ENCODE measurements at regions of chr10 and their contacts with region 1.

Region 1: DNA sequence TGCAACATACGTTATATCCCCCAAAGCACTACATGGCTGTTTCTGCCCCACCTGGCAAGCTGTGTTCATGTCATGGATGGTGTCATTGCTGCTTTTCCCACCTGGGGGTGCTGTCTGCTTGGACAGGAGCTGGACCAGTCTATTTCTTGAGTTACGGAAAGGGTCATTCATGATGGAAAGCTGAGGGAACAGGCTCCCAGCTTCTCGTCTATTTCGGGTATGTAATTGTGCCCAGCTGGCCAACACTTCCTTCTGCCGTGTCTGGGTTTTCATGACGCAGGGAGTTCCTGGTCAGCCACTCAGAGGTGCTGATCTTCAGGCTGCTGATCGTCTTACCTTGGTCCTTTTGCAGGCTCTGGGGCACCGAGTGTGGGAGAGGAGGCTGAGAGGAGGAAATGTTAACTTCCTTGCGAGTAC is 8.6 kb downstream of the BTBD16 start:
- DNase-seq: no peak
- ATAC-seq: peak; percentile 80
- H3K4me3 ChIP-seq: no peak overlapping the region
- H3K27ac ChIP-seq: no peak overlapping the region
- H3K4me1 ChIP-seq: peaks cover 8% of the 10 kb centered on the region
- H3K27me3 ChIP-seq: no peaks in the 10 kb centered on the region
- CTCF ChIP-seq: peak; percentile 90

Region 2: DNA sequence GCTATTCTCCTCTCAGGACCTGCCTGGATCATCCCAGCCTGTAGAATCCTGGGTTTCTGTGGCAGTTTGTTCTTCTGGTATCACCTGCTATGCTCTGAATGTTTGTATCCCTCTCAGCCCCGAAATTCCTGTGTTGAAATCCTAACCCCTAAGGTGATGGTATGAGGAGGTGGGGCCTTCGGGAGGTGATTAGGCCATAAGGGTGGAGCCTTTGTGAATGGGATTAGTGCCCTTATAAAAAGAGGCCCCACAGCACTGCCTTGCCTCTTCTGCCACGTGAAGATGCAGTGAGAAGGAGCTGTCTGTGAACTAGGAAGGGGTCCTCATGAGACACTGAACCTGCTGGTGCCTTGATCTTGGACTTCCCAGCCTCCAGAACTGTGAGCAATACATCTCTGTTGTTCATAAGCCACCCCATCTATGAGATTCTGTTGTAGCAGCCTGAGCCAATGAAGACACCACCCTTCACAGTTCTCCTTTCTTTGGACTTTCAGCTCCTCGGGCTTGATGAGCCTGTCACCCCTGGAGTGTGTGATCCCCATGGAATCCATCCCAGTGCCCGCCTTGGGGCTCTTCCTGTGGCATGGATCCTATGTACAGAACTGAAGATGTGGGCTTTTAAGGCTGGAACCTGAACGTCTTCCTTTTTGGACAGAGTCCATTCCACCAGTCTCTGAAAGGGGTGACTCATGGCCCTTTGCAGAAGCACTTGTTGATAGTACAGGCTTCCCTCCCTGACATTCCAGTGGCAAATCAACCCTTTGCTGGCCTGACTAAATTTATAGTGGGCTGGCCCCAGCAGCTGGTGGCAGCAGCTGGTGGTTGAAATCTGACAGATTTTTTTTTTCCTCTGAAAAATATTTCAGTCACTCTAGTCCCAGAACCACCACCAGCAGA is 152.7 kb before region 1 on chr10:
- CTCF ChIA-PET with region 1: no interaction called
- POLR2A ChIA-PET with region 1: interaction called, 16 read pairs
- in situ Hi-C with region 1: no loop called
- intact Hi-C with region 1: no loop called
- DNase-seq: no peak
- ATAC-seq: peak; percentile 83
- H3K4me3 ChIP-seq: peak overlapping the region in 1 of 2 experiments; percentile 41; a peak in 2 of 4 replicates
- H3K27ac ChIP-seq: peak overlapping the region; percentile 82
- H3K4me1 ChIP-seq: peaks cover 69% of the 10 kb centered on the region
- H3K27me3 ChIP-seq: no peaks in the 10 kb centered on the region
- CTCF ChIP-seq: no peak

Region 3: DNA sequence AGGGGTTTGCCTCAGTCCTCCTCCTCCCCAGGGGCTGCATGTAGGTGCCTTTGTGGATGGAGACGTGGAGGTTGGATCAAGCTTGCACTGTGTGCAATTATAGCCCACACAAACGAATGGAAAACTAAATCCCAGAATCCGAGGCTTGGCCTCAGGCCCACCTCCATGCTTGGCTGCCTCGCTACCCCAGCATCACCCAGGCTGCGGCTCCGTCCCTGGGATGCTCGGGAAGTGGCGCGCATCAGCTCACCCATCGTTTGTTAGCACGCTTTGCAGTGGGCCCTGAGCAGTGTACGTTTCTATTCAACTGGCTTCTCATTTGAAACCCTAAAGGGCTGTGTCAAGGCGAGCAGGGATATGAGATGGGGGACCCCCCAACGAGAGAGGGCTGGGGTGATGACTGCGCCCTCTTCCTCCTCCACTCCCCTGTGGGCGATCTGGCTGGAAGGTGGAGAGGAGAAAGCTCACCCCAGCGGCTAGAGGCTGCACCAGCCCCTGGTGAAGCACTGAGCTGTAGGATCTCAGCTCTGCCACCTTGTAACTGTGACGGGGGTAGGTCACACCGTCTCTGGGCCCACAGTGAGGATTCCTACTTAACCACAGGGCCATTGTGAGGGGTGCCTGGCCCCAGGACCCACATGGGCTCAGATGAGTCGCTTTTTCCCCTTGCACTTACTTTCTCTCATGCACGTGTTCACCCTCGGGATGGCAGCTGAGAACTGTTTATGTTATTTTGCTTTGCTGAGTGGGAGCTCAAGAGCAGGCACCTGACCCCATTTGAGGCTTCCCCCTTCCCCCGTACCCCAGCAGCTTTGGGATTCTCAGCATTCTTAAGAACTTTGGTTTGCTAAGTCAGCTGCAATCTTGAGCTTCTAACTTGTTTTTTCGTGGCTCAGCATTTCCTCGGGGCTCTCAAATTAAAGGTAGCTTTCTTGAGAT is 21.3 kb before region 1 on chr10:
- CTCF ChIA-PET with region 1: interaction called, 10 read pairs
- POLR2A ChIA-PET with region 1: no interaction called
- in situ Hi-C with region 1: no loop called
- intact Hi-C with region 1: no loop called
- DNase-seq: no peak
- ATAC-seq: peak; percentile 63
- H3K4me3 ChIP-seq: no peak overlapping the region
- H3K27ac ChIP-seq: no peak overlapping the region
- H3K4me1 ChIP-seq: no peaks in the 10 kb centered on the region
- H3K27me3 ChIP-seq: no peaks in the 10 kb centered on the region
- CTCF ChIP-seq: no peak

Region 4: GRCh38 chr10:122310311-122311050 is 30.7 kb after region 1 on chr10:
- CTCF ChIA-PET with region 1: interaction called, 14 read pairs
- POLR2A ChIA-PET with region 1: no interaction called
- in situ Hi-C with region 1: no loop called
- intact Hi-C with region 1: no loop called
- DNase-seq: no peak
- ATAC-seq: peak; percentile 85
- H3K4me3 ChIP-seq: peak overlapping the region in 1 of 2 experiments; percentile 27; a peak in 2 of 4 replicates
- H3K27ac ChIP-seq: peak overlapping the region; percentile 95
- H3K4me1 ChIP-seq: peaks cover 56% of the 10 kb centered on the region
- H3K27me3 ChIP-seq: no peaks in the 10 kb centered on the region
- CTCF ChIP-seq: no peak; the same call in 1 of the 2 replicates